PC-9 (cell line): ENCODE measurements at regions of chr12 and their contacts with region 1.

Region 1: DNA sequence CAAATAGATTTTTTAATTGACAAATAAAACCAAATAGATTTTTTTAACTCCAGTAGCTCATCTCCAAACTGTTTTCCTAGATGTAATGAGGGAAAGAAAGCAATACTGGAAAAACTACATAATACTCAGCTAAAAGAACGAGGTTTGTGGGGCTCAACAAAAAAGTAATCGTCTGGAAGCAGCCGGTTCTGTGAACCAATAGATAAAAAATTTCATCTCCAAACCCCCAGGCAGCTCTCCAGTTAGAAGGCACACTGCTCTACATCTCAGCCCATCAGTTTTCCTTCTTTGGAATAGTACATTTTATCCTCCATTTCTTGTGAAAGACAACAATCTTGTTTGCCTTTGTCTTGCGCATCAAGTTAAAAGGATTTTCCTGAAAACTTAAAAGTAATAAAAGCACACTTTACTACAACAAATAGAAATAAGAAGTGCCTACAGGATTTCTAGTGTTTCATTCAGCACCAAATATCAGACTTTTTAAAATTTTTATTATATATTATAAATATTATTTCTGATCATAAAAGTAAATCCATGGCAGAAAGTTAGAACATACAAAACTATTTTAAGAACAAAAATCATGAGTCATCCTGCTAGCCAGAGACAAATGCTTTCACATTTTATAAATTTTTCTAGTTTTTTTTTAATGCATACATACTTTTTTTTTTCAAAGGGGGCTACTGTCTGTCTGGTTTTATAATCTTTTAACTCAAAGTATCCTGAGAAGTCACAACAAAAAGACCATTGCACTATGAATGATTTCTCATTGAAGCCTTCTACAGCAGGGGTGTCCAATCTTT is 67.7 kb downstream of the EPS8 start:
- DNase-seq: no peak
- H3K4me3 ChIP-seq: no peak overlapping the region
- H3K27ac ChIP-seq: 0 out of 2 replicates have a peak overlapping the region, but pooled peaks have one; percentile 35
- H3K4me1 ChIP-seq: peaks cover 29% of the 10 kb centered on the region
- H3K27me3 ChIP-seq: no peaks in the 10 kb centered on the region
- CTCF ChIP-seq: no peak

Region 2: DNA sequence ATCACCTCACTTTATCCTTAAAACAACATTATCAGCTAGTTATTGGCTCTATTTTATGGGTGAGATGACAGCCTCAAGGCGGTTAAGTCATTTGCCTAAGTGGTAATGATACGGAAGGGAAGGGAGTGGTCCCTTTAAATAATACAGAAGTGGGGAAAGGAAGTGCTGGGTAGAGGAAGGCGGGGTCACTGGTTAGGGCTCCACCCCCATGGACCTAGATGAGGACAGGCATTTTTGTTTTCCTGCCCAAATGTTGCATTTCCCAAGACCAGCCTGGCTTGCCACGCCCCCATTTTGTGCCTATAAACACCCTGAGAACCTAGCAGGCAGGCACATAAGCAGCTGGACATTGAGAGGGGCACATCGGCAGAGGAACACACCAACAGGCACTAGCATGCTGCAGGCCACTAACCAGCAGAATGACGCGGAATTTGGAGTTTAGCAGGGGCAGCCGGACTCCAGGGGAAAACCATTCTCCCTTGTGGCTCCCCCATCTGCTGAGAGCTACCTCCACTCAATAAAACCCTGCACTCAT is 33.2 kb before region 1 on chr12:
- CTCF ChIA-PET with region 1: no interaction called
- POLR2A ChIA-PET with region 1: interaction called, 8 read pairs
- intact Hi-C with region 1: loop called (anchors 5 kb)
- DNase-seq: no peak
- H3K4me3 ChIP-seq: no peak overlapping the region
- H3K27ac ChIP-seq: no peak overlapping the region
- H3K4me1 ChIP-seq: peaks cover 15% of the 10 kb centered on the region
- H3K27me3 ChIP-seq: no peaks in the 10 kb centered on the region
- CTCF ChIP-seq: no peak